ENCODE measurements at regions of chr7 and their contacts with region 1.

Region 1: DNA sequence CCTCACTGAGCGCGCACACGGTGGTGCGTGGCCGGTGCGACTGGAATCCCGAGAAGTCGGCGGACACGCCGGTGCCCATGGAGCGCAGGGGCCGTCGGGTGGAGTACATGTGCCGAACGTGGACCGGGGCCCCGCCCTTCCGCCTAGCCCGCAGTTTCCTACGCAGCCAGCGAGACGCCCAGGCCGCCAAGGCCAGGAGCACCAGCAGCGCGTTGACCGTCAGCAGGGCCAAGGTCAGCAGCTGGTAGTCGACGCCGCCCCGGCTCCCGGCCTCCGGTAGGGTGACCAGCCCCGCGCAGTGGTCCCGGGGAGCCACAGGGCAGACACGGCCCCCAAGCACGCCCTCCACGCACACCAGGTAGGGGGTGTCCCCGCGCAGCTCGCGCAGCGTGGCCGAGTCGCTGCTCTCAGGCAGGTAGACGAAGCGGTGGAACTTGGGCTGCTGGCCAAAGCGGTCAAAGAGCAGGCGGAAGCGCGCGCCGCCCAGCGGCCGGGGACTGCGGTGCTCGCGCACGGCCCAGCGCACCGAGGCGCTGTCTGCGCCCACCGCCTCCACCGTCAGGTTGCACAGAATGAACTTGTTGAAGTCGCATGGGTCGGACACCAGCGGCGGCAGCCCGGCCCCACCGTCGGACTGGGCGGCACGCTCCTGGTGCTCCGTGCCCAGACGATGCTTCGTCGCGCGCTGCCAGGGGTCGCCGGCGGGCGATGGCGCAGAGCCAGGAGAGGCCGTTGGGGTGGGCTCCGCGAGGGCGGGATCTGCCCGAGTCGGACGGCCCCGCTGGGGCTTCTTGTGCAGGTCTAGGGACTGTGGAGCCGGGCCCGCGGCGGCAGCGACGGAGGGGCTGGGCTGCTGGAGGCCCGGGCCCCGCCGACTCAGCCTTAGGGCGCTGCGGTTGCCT is 2.2 kb downstream of the TRIL start:
- DNase-seq: peak; percentile 57
- H3K4me3 ChIP-seq: peak overlapping the region in 2 of 3 experiments; percentile 13 to 16
- H3K27ac ChIP-seq: no peak overlapping the region
- H3K4me1 ChIP-seq: peaks cover 11% of the 10 kb centered on the region
- H3K27me3 ChIP-seq: peaks cover 18 to 26% of the 10 kb centered on the region in 2 experiments
- CTCF ChIP-seq: peak; percentile 77 to 86
- POLR2A ChIP-seq: no peak

Region 2: DNA sequence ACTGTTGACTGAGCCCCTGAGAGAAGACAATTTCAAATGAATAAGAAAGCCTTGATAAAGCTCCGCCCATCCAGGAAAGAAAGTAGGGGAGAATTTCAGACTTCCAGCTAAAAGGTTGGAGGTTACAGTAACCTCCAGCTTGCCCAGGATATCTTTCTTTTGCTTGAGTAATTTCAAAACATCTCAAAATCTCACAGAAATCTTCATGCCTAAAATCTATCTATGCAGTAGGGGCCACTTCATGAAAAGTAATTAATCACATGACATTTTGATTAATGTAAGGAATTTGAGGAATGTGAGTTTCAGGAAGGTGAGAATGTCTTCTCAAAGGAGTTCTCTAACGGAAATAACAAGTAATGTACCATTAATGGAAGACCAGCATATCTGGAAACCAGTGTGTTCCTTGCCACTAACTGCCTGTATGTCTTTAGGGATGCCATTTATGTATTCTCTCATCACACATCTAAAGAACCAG is 22.1 kb before region 1 on chr7:
- CTCF ChIA-PET with region 1: interaction called, 518 read pairs
- POLR2A ChIA-PET with region 1: no interaction called
- dilution Hi-C with region 1: no loop called
- intact Hi-C with region 1: no loop called
- DNase-seq: peak; percentile 33
- H3K4me3 ChIP-seq: no peak overlapping the region
- H3K27ac ChIP-seq: peak overlapping the region; percentile 48
- H3K4me1 ChIP-seq: peaks cover 13% of the 10 kb centered on the region
- H3K27me3 ChIP-seq: no peaks in the 10 kb centered on the region
- CTCF ChIP-seq: no peak
- POLR2A ChIP-seq: no peak

Region 3: DNA sequence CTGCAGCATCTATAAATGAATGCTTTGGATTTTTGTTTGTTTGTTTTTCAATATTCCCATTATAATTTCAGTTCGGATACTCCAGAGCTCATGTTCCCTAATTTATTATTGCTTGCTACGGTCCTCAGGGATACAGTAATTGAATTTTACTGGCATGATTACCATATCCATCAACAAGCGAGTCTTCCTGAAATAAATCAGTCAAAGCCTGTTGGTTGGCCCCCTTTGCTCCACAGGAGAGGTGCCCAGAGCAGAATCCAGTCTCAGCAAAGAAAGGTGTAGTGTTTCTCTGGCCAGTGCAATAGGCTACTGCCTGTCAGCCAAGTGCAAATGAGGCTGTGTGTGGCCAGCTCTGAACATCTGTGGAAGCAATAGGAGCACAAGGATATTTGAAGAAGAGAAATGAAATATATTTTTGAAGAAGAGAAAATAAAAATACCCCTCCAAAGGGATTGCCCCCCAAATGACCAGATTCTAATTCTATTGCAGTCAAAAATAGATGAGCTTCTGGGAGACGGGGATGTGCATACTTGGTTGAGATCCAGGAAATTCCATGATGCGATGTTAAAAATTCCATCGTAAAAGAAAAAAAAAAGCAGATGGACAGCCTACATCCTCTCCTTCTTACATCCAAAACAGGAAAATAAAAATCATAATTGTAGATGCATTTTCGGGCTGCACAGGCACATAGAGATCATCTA is 16.0 kb before region 1 on chr7:
- CTCF ChIA-PET with region 1: interaction called, 14 read pairs
- POLR2A ChIA-PET with region 1: no interaction called
- dilution Hi-C with region 1: no loop called
- intact Hi-C with region 1: no loop called
- DNase-seq: no peak
- H3K4me3 ChIP-seq: no peak overlapping the region
- H3K27ac ChIP-seq: no peak overlapping the region
- H3K4me1 ChIP-seq: no peaks in the 10 kb centered on the region
- H3K27me3 ChIP-seq: no peaks in the 10 kb centered on the region
- CTCF ChIP-seq: no peak
- POLR2A ChIP-seq: no peak

Region 4: DNA sequence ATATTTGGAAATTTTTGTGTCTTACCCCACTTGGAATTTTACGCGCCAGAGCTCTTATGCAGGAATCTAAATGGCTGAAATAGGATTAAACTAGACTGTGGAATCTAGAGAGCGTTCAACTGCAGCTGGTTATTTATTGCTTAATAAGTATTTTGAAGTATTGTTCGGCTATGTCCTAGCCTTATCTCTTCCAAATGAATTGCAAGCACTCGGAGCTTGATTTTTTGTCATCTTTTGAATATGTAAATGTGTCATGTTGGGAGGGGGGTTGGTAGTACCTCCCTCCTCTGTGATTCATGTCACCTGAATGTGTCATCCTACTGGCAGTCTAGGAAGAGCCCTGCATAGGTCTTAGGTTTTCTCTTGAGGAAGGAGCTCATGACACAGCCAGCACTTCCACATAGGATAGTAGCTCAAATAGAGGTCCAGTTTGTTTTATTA is 24.5 kb after region 1 on chr7:
- CTCF ChIA-PET with region 1: interaction called, 17 read pairs
- POLR2A ChIA-PET with region 1: no interaction called
- dilution Hi-C with region 1: no loop called
- intact Hi-C with region 1: no loop called
- DNase-seq: no peak
- H3K4me3 ChIP-seq: no peak overlapping the region
- H3K27ac ChIP-seq: no peak overlapping the region
- H3K4me1 ChIP-seq: no peaks in the 10 kb centered on the region
- H3K27me3 ChIP-seq: peaks cover 2% of the 10 kb centered on the region in 2 experiments
- CTCF ChIP-seq: no peak
- POLR2A ChIP-seq: no peak

Region 5: GRCh38 chr7:29035044-29035740 is 79.2 kb after region 1 on chr7:
- CTCF ChIA-PET with region 1: interaction called, 25 read pairs
- POLR2A ChIA-PET with region 1: no interaction called
- dilution Hi-C with region 1: no loop called
- intact Hi-C with region 1: loop called (anchors 1 kb)
- DNase-seq: peak; percentile 91
- H3K4me3 ChIP-seq: no peak overlapping the region
- H3K27ac ChIP-seq: peak overlapping the region; percentile 72
- H3K4me1 ChIP-seq: peaks cover 63% of the 10 kb centered on the region
- H3K27me3 ChIP-seq: no peaks in the 10 kb centered on the region
- CTCF ChIP-seq: no peak
- POLR2A ChIP-seq: peak; percentile 40

Region 6: GRCh38 chr7:29091715-29092114 is 135.7 kb after region 1 on chr7:
- CTCF ChIA-PET with region 1: interaction called, 161 read pairs
- POLR2A ChIA-PET with region 1: no interaction called
- dilution Hi-C with region 1: no loop called
- intact Hi-C with region 1: no loop called
- DNase-seq: no peak
- H3K4me3 ChIP-seq: peak overlapping the region in 2 of 3 experiments; percentile 15 to 53
- H3K27ac ChIP-seq: no peak overlapping the region
- H3K4me1 ChIP-seq: peaks cover 6% of the 10 kb centered on the region
- H3K27me3 ChIP-seq: peaks cover 3 to 6% of the 10 kb centered on the region in 2 experiments
- CTCF ChIP-seq: no peak
- POLR2A ChIP-seq: no peak

Region 7: DNA sequence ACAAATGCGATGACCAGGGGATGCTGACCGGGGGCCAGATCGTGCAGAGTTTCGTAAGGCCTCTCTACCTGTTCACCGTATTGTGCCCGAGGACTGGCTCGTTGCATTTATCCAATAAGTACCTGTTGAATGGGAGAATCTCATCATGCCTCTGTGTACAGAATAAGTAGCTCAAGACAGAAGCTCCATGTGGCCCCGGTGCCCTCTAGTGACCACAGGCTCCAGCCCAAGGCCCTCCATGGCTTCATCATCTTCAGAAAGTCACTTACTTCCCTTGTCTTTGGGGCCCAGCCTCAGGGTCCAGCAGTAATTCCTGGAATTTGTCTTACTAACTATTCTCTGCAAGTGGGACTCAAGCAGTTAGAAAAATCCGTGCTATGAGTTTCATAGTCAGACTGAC is 389.6 kb after region 1 on chr7:
- CTCF ChIA-PET with region 1: interaction called, 10 read pairs
- POLR2A ChIA-PET with region 1: no interaction called
- dilution Hi-C with region 1: no loop called
- intact Hi-C with region 1: no loop called
- DNase-seq: peak; percentile 41
- H3K4me3 ChIP-seq: no peak overlapping the region
- H3K27ac ChIP-seq: no peak overlapping the region
- H3K4me1 ChIP-seq: no peaks in the 10 kb centered on the region
- H3K27me3 ChIP-seq: peaks cover 1 to 5% of the 10 kb centered on the region in 2 experiments
- CTCF ChIP-seq: peak; percentile 45 to 49
- POLR2A ChIP-seq: no peak

Measured in endothelial cell of umbilical vein (primary cell).